Naive thymus-derived CD4-positive, alpha-beta T cell (primary cell): ENCODE measurements at regions of chr3 and their contacts with region 1.

Region 1: GRCh38 chr3:107522510-107523288 is at the start of gene BBX:
- DNase-seq: peak; percentile 88 to 97 (median 97)
- ATAC-seq: peak; percentile 95
- H3K4me3 ChIP-seq: peak within 1 kb of the TSS; percentile 82
- H3K4me3 Mint-ChIP-seq: peak within 1 kb of the TSS; percentile 75 to 100 (median 98)
- H3K27ac ChIP-seq: peak within 1 kb of the TSS; percentile 91
- H3K27ac Mint-ChIP-seq: peak within 1 kb of the TSS; percentile 84 to 99 (median 97)
- H3K4me1 ChIP-seq: peaks cover 9 to 14% of the 10 kb centered on the region in 2 donors
- H3K4me1 Mint-ChIP-seq: peaks cover 17 to 35% (median 30%) of the 10 kb centered on the region in 7 donors
- H3K27me3 ChIP-seq: no peaks in the 10 kb centered on the region
- H3K27me3 Mint-ChIP-seq: peaks cover 0 to 2% (median 0%) of the 10 kb centered on the region in 5 donors
- total RNA-seq, gene BBX: 44.3 to 103 (median 73.5) TPM

Region 2: DNA sequence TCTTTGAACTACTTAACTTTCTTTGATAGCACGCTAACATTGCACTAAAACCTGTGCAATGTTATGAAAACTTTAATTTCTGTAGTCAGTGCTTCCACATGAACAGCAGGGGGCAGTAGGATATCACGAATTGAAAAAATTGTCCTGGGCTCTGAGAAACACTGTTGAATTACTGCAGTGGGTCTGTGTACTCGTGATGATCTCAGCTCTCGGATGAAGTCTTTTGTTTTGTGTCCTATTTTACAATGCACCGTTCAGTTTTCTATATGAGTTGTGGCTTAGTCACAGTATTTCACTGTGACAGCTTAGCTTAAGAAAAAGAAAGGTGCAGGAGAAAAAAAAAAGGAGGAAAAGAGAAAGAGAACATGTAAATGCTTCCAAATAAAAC is 286.8 kb before region 1 on chr3:
- CTCF ChIA-PET with region 1: no interaction called
- POLR2A ChIA-PET with region 1: no interaction called
- intact Hi-C with region 1: loop called (anchors 1 to 5 kb)
- DNase-seq: peak in 7 of 9 donors; percentile 43 to 78 (median 73)
- ATAC-seq: peak; percentile 84
- H3K4me3 ChIP-seq: peak overlapping the region; percentile 42
- H3K4me3 Mint-ChIP-seq: peak overlapping the region in 9 of 10 donors; percentile 40 to 80 (median 61)
- H3K27ac ChIP-seq: no peak overlapping the region
- H3K27ac Mint-ChIP-seq: peak overlapping the region in 1 of 9 donors; percentile 33
- H3K4me1 ChIP-seq: peaks cover 0 to 2% of the 10 kb centered on the region in 2 donors
- H3K4me1 Mint-ChIP-seq: peaks cover 2 to 17% (median 12%) of the 10 kb centered on the region in 7 donors
- H3K27me3 ChIP-seq: no peaks in the 10 kb centered on the region
- H3K27me3 Mint-ChIP-seq: peaks cover 0 to 35% (median 10%) of the 10 kb centered on the region in 5 donors

Region 3: DNA sequence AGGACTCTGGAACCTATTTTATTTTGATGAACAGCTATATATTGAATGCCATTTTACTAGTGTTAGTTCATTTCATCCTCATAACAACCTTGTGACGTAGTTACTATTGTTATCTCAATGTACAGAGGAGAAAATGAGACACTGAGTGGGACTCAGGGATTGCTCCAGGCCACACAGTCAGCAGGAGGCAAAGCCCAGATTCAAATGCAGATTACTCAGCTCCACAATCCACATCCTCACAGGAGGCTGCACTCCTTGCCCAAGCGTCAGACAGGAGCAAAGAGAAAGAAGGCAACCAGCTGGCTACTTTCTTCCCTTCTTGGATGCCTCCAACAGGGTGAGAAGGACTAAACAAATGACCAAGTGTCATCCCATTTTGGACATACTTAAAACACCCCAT is 237.5 kb before region 1 on chr3:
- CTCF ChIA-PET with region 1: no interaction called
- POLR2A ChIA-PET with region 1: no interaction called
- intact Hi-C with region 1: no loop called
- DNase-seq: no peak
- ATAC-seq: no peak
- H3K4me3 ChIP-seq: no peak overlapping the region
- H3K4me3 Mint-ChIP-seq: no peak overlapping the region
- H3K27ac ChIP-seq: no peak overlapping the region
- H3K27ac Mint-ChIP-seq: no peak overlapping the region
- H3K4me1 ChIP-seq: no peaks in the 10 kb centered on the region
- H3K4me1 Mint-ChIP-seq: peaks cover 0 to 10% (median 0%) of the 10 kb centered on the region in 7 donors
- H3K27me3 ChIP-seq: no peaks in the 10 kb centered on the region
- H3K27me3 Mint-ChIP-seq: peaks cover 0 to 36% (median 9%) of the 10 kb centered on the region in 5 donors

Region 4: DNA sequence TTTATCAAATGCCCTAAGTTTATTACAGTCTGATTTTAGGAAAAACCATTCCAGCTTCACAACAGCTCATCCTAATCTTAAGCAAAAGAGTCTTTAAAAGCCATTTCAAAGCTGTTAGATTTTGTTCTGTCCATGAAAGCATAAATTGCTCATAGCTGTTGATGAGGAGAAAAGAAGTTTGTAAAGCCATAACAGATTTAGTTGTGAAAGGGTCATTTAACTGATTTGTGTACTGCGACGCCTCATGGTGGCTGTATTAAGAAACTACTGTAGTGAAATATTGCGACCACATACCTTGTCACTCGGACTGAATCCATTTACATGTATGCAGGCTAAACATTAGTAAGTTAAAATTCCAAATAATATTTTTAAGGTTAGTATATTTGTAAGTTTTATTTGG is 21.0 kb after region 1 on chr3:
- CTCF ChIA-PET with region 1: no interaction called
- POLR2A ChIA-PET with region 1: interaction called, 3 read pairs
- intact Hi-C with region 1: loop called in 1 of 2 experiments (anchors 1 kb)
- DNase-seq: no peak
- ATAC-seq: peak; percentile 36
- H3K4me3 ChIP-seq: no peak overlapping the region
- H3K4me3 Mint-ChIP-seq: no peak overlapping the region
- H3K27ac ChIP-seq: no peak overlapping the region
- H3K27ac Mint-ChIP-seq: no peak overlapping the region
- H3K4me1 ChIP-seq: peaks cover 0 to 3% of the 10 kb centered on the region in 2 donors
- H3K4me1 Mint-ChIP-seq: peaks cover 5 to 65% (median 51%) of the 10 kb centered on the region in 7 donors
- H3K27me3 ChIP-seq: no peaks in the 10 kb centered on the region
- H3K27me3 Mint-ChIP-seq: no peaks in the 10 kb centered on the region

Region 5: DNA sequence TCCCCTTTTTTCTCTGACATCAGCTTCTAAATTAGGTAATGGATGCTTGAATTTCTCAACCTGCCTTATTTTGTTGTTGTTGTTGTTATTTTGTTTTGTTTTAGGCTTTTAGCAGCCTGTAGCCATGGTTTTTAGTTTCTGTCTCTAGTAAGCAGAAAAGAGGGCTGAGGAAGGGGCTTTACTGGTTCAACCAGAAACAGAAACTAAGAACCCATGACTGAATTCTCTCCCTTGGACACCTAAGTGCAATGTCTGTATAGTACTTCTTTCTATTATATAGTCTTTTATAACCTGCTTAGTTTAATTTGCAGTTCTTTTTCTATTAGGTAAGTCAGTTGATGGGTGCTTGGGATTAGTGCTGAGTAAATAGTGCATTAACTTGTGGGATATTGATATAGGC is 129.1 kb after region 1 on chr3:
- CTCF ChIA-PET with region 1: no interaction called
- POLR2A ChIA-PET with region 1: no interaction called
- intact Hi-C with region 1: loop called in 1 of 2 experiments (anchors 5 kb)
- DNase-seq: no peak
- ATAC-seq: no peak
- H3K4me3 ChIP-seq: no peak overlapping the region
- H3K4me3 Mint-ChIP-seq: peak overlapping the region in 1 of 10 donors; percentile 46
- H3K27ac ChIP-seq: no peak overlapping the region
- H3K27ac Mint-ChIP-seq: peak overlapping the region in 6 of 9 donors; percentile 4 to 83 (median 32)
- H3K4me1 ChIP-seq: peaks cover 4 to 7% of the 10 kb centered on the region in 2 donors
- H3K4me1 Mint-ChIP-seq: peaks cover 5 to 54% (median 32%) of the 10 kb centered on the region in 7 donors
- H3K27me3 ChIP-seq: no peaks in the 10 kb centered on the region
- H3K27me3 Mint-ChIP-seq: no peaks in the 10 kb centered on the region

Region 6: DNA sequence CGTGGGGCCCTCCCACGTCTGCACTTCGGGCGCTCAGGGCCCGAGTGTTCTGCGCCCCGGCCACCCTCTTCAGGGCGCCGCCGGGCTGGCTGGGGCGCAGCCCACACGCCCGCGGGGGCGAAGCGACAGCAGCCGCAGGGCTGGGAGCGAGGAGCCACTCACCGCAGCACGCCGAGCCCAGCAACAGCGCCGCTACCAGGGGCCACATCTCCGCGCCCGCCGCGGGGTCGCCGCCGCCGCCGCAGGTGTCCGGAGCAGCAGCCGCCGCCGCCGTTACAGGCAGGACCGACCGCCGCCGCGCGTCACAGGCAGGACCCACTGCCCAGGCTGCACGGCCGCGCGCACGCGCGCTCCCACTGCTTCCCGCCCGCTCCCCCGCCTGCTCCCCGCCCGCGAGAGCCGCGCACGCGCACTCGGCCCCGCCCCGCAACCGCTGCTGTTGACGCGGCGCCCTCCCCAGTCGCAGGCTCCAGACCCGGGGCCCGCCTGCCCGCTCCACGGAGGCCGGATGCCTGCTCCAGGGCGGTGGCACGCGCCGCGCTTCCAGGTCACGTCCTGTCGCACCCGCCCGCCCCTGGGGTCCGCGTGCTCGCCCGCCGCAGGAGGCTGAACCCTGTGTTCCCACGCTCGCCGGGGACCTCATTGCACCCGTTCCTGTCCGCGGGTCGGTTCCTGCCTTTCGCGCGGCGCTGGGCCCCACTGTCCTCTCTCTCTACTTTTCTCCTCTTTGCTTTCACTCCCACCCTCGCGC is 568.2 kb after region 1 on chr3 and contains the start of gene CD47:
- CTCF ChIA-PET with region 1: no interaction called
- POLR2A ChIA-PET with region 1: no interaction called
- intact Hi-C with region 1: loop called (anchors 2 kb)
- DNase-seq: peak; percentile 94 to 98 (median 98)
- ATAC-seq: peak; percentile 85
- H3K4me3 ChIP-seq: peak within 1 kb of the TSS; percentile 92
- H3K4me3 Mint-ChIP-seq: peak within 1 kb of the TSS in 8 of 10 donors; percentile 85 to 100 (median 98)
- H3K27ac ChIP-seq: peak within 1 kb of the TSS; percentile 100
- H3K27ac Mint-ChIP-seq: peak within 1 kb of the TSS; percentile 94 to 100 (median 99)
- H3K4me1 ChIP-seq: peaks cover 43 to 50% of the 10 kb centered on the region in 2 donors
- H3K4me1 Mint-ChIP-seq: peaks cover 33 to 56% (median 41%) of the 10 kb centered on the region in 7 donors
- H3K27me3 ChIP-seq: no peaks in the 10 kb centered on the region
- H3K27me3 Mint-ChIP-seq: peaks cover 0 to 10% (median 0%) of the 10 kb centered on the region in 5 donors
- total RNA-seq, gene CD47: 130 to 232 (median 136) TPM

Region 7: DNA sequence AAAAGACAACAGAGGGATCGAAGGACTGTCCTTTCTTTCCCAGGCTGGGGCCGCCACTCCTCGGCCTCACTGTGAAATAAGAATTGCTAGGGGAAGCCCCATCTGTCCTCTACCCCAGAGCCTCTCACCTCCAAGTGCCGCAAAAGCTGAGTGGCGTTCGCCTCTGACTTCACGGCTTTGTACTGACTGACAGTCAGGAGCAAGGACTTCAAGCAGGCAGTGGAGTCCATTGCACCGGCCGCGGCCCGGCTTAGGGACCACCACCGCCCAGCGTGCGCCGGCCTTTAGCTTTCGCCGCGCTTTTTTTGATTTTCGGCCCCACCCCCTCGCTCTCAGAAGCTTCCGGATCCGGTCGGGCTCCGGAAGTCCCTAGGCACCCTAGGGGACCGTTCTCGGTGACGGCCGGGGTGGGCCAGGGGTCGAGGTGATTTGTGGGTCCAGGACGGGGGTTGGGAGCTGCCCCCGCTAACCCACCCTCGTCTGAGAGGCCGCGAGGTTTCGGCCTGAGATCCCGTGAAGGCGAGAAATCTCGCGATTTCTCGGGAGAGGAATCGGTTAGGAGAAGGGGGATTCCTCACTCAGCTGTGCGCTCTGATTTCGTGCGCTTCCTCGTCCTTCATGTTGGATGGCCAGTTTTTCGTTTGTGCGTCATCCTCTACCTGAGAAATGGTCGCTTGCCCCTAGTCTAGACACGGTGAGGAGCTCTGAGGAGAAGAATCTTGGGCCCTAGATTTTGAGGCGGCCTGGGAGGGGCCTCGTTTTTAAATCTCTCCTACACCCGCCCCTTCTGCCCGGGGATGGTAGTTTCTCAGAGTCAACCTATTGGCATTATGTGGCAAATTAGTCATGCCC is 1066.7 kb after region 1 on chr3 and contains the starts of genes CIP2A and DZIP3:
- CTCF ChIA-PET with region 1: interaction called, 4 read pairs
- POLR2A ChIA-PET with region 1: interaction called, 3 read pairs
- intact Hi-C with region 1: loop called (anchors 1 to 2 kb)
- DNase-seq: peak; percentile 74 to 88 (median 82)
- ATAC-seq: peak; percentile 83
- H3K4me3 ChIP-seq: peak within 1 kb of the TSS; percentile 87
- H3K4me3 Mint-ChIP-seq: peak within 1 kb of the TSS; percentile 94 to 99 (median 98)
- H3K27ac ChIP-seq: peak within 1 kb of the TSS; percentile 92
- H3K27ac Mint-ChIP-seq: peak within 1 kb of the TSS; percentile 95 to 100 (median 99)
- H3K4me1 ChIP-seq: peaks cover 11 to 15% of the 10 kb centered on the region in 2 donors
- H3K4me1 Mint-ChIP-seq: peaks cover 12 to 53% (median 39%) of the 10 kb centered on the region in 7 donors
- H3K27me3 ChIP-seq: no peaks in the 10 kb centered on the region
- H3K27me3 Mint-ChIP-seq: no peaks in the 10 kb centered on the region
- total RNA-seq, gene CIP2A: 3.4 to 44.2 (median 4.1) TPM
- total RNA-seq, gene DZIP3: 9.6 to 17.3 (median 14.6) TPM